Naive thymus-derived CD8-positive, alpha-beta T cell (primary cell): ENCODE measurements at regions of chr15 and their contacts with region 1.

Region 1: GRCh38 chr15:41774062-41774881 is at the start of gene MAPKBP1:
- DNase-seq: peak; percentile 93 to 99 (median 97)
- ATAC-seq: peak; percentile 85 to 87
- H3K4me3 Mint-ChIP-seq: peak within 1 kb of the TSS; percentile 90 to 99 (median 96)
- H3K27ac Mint-ChIP-seq: peak within 1 kb of the TSS; percentile 86 to 97 (median 96)
- H3K4me1 Mint-ChIP-seq: peaks cover 32 to 64% (median 60%) of the 10 kb centered on the region in 4 donors
- H3K27me3 Mint-ChIP-seq: no peaks in the 10 kb centered on the region
- polyA plus RNA-seq, gene MAPKBP1: 1.5 to 4.0 (median 2.4) TPM

Region 2: DNA sequence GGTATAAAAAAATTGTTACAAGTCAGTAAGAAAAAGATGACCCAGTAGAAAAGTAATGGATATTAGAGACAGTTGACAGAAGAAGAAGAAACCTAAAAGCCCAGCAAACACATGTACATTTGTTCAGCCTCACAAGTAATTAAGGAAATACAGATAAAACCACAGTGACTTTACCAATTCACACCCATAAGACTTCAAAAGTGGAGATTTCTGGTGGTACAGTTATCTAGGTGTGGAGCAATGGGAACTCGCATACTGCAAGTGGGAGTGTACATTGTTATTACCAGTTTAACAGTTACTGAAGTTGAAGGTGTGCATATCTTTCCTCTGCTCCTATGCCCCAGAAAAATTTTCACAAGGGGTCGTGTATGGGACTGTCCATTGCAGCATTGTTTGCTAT is 18.1 kb before region 1 on chr15:
- POLR2A ChIA-PET with region 1: no interaction called
- DNase-seq: no peak
- ATAC-seq: no peak
- H3K4me3 Mint-ChIP-seq: no peak overlapping the region
- H3K27ac Mint-ChIP-seq: peak overlapping the region in 1 of 10 donors; percentile 40
- H3K4me1 Mint-ChIP-seq: peaks cover 0 to 2% (median 0%) of the 10 kb centered on the region in 4 donors
- H3K27me3 Mint-ChIP-seq: no peaks in the 10 kb centered on the region

Region 3: GRCh38 chr15:41811432-41812195 is 37.3 kb after region 1 on chr15:
- POLR2A ChIA-PET with region 1: interaction called, 37 read pairs
- DNase-seq: peak; percentile 61 to 86 (median 72)
- ATAC-seq: peak; percentile 90 to 98
- H3K4me3 Mint-ChIP-seq: no peak overlapping the region
- H3K27ac Mint-ChIP-seq: peak overlapping the region in 2 of 10 donors; percentile 48 to 57
- H3K4me1 Mint-ChIP-seq: peaks cover 9 to 21% (median 20%) of the 10 kb centered on the region in 4 donors
- H3K27me3 Mint-ChIP-seq: no peaks in the 10 kb centered on the region

Region 4: GRCh38 chr15:41827880-41828806 is 53.9 kb after region 1 on chr15 and contains the start of gene JMJD7:
- POLR2A ChIA-PET with region 1: interaction called, 19 read pairs
- DNase-seq: peak; percentile 86 to 99 (median 92)
- ATAC-seq: peak; percentile 85 to 88
- H3K4me3 Mint-ChIP-seq: peak within 1 kb of the TSS; percentile 86 to 98 (median 94)
- H3K27ac Mint-ChIP-seq: peak within 1 kb of the TSS; percentile 63 to 96 (median 91)
- H3K4me1 Mint-ChIP-seq: peaks cover 22 to 56% (median 50%) of the 10 kb centered on the region in 4 donors
- H3K27me3 Mint-ChIP-seq: no peaks in the 10 kb centered on the region
- polyA plus RNA-seq, gene JMJD7: 19.1 to 22.6 (median 20.8) TPM

Region 5: GRCh38 chr15:41838400-41838897 is 64.2 kb after region 1 on chr15 and contains the start of gene PLA2G4B:
- POLR2A ChIA-PET with region 1: no interaction called
- DNase-seq: no peak
- ATAC-seq: no peak
- H3K4me3 Mint-ChIP-seq: no peak within 1 kb of the TSS
- H3K27ac Mint-ChIP-seq: peak within 1 kb of the TSS in 3 of 10 donors; percentile 9 to 78 (median 15)
- H3K4me1 Mint-ChIP-seq: peaks cover 9 to 29% (median 13%) of the 10 kb centered on the region in 4 donors
- H3K27me3 Mint-ChIP-seq: no peaks in the 10 kb centered on the region
- polyA plus RNA-seq, gene PLA2G4B: 0.82 to 2.9 (median 1.1) TPM

Region 6: DNA sequence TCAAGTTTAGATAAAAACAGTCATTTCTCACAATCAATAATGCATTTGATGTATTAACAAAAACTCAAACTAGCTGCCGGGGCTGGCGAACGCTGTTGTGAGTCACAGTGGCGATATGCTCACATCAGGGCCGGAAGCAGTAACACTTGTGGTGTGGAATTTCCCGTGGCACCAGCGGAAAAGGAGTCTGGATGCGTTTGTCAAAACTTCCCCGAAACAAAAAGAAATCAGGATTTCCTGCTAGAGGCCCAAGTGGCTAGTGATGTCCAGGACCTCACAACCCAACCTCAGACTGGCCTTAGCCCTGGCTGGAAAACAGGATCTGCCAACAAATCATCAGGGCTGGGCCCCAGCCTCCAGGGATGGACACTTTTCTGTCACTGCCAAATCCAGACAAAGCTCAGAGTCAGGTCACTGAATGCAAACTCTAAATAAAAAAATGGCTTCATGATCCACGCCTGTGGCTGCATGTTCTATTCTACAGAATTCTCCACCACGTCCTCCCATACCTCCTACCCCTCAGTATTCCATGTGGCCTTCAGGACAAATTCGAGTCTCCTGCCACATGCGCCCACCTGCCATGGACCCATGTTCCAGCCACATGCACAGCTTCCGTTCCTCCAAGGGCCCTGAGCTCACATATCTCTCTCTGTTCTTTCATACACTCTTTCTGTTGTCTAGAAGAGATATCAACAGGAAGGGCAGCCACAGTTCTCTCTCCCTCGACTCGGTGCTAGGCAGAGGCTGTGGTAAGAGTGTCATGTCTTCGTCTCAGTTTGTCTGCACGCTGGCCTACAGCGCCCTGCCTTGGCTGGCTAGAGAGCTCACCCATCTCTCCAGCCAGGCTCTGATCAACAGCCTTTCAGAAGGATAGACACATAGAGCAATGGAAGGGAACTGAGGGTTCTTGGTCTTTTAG is 162.6 kb after region 1 on chr15:
- POLR2A ChIA-PET with region 1: interaction called, 15 read pairs
- DNase-seq: peak; percentile 35 to 85 (median 70)
- ATAC-seq: peak; percentile 86 to 89
- H3K4me3 Mint-ChIP-seq: peak overlapping the region; percentile 20 to 89 (median 76)
- H3K27ac Mint-ChIP-seq: peak overlapping the region; percentile 93 to 100 (median 98)
- H3K4me1 Mint-ChIP-seq: peaks cover 27 to 69% (median 56%) of the 10 kb centered on the region in 4 donors
- H3K27me3 Mint-ChIP-seq: no peaks in the 10 kb centered on the region

Region 7: DNA sequence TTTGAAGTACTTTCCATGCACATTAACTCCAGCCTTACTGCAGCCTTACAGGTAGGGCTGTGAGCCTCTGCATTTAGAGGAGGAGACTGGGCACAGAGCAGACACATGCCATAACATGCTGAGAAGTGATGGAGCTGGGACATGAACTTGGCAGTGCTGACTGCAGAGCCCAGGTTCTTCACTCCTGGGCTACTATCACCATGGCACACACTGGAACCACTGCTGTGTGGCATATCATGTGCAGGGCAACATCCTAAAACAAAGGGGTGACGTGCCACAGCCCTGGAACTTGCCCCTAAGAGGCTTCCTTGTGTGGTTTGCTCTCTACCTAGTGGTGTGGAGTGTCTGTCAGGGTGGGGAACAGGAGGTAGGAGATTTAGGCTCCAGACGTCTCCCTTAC is 172.7 kb after region 1 on chr15:
- POLR2A ChIA-PET with region 1: no interaction called
- DNase-seq: no peak
- ATAC-seq: no peak
- H3K4me3 Mint-ChIP-seq: no peak overlapping the region
- H3K27ac Mint-ChIP-seq: peak overlapping the region in 1 of 10 donors; percentile 25
- H3K4me1 Mint-ChIP-seq: peaks cover 0 to 2% (median 1%) of the 10 kb centered on the region in 4 donors
- H3K27me3 Mint-ChIP-seq: no peaks in the 10 kb centered on the region